Pancreas (tissue), 10 donors: ENCODE measurements at regions of chr12 and their contacts with region 1.

Region 1: DNA sequence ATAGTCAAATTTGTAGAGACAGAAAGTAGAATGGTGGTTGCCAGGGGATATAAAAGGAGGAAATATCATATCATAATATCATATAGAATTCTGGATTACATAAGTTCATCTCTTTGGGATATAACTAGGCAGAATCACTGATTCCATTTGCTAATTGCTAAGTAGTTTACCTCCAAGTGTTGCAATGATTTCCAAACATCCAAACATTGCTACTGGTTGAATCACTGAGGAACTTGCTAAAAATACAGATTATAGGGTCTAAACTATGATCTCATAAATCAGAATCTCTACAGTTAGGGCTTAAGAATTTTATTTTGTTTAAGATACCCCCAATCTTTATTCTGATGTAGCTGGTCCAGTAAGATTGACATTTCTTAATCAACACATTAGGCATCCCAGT is 16.1 kb upstream of the TAS2R42 start:
- DNase-seq: no peak
- ATAC-seq: no peak
- H3K4me3 ChIP-seq: no peak overlapping the region
- H3K27ac ChIP-seq: no peak overlapping the region
- H3K4me1 ChIP-seq: no peaks in the 10 kb centered on the region
- H3K27me3 ChIP-seq: no peaks in the 10 kb centered on the region
- CTCF ChIP-seq: no peak

Region 2: DNA sequence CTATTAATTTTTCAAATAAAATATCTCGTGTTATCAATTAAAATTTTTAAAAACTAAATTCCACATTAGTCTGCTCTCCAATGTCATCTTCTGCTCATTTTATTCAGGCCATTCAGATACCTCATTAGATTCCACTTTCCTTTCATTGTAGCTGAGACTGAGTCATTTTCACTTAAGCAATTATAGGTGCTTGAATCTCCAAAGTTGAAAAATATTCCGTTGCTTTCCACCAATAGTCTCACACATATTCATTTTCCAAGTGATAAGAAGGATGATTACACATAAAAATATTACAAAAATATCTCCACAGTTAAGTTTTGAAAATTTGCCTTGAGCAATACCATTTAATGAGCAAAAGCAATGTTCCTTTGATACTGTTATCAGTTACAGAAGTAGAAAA is 443.2 kb before region 1 on chr12:
- intact Hi-C with region 1: loop called in 1 of 3 experiments (anchors 10 kb)
- DNase-seq: no peak
- ATAC-seq: no peak
- H3K4me3 ChIP-seq: no peak overlapping the region
- H3K27ac ChIP-seq: no peak overlapping the region
- H3K4me1 ChIP-seq: no peaks in the 10 kb centered on the region
- H3K27me3 ChIP-seq: peaks cover 0 to 4% (median 0%) of the 10 kb centered on the region in 4 donors
- CTCF ChIP-seq: no peak

Region 3: DNA sequence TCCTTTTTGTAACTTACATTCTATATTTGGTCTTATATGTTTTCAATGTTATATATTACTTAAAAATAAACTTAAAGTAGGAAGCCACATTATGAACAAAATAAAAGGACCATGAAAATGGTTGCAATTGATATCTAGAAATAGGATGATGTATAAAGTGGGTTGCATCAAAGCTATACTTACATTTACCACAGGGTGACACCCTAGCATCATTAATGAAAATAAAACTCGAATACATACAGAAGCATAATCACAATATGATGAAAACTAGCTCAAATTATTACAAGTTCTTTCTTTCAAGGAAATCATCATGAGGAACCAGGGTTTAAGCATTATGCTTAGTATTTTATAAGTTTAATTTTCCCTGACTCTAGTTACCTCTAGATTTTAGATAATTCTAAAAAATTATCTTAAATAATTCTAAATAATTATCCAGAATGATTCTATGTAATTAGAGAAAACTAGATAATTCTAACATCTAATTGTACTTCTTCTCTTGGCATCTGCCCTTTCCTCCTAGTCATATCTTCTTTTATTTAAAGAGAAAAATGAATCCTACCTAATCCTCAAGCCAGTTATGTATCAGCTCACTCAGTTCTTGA is 431.6 kb before region 1 on chr12:
- intact Hi-C with region 1: loop called in 2 of 3 experiments (anchors 10 kb)
- DNase-seq: no peak
- ATAC-seq: peak; percentile 73 to 85 (median 82)
- H3K4me3 ChIP-seq: no peak overlapping the region
- H3K27ac ChIP-seq: no peak overlapping the region
- H3K4me1 ChIP-seq: no peaks in the 10 kb centered on the region
- H3K27me3 ChIP-seq: peaks cover 0 to 9% (median 2%) of the 10 kb centered on the region in 4 donors
- CTCF ChIP-seq: peak in 3 of 4 donors; percentile 35 to 49 (median 40)

Region 4: GRCh38 chr12:11535127-11535526 is 332.3 kb after region 1 on chr12:
- intact Hi-C with region 1: no loop called
- DNase-seq: no peak
- ATAC-seq: no peak
- H3K4me3 ChIP-seq: no peak overlapping the region
- H3K27ac ChIP-seq: no peak overlapping the region
- H3K4me1 ChIP-seq: no peaks in the 10 kb centered on the region
- H3K27me3 ChIP-seq: no peaks in the 10 kb centered on the region
- CTCF ChIP-seq: no peak